ENCODE measurements at regions of chr1 and their contacts with region 1.

Region 1: DNA sequence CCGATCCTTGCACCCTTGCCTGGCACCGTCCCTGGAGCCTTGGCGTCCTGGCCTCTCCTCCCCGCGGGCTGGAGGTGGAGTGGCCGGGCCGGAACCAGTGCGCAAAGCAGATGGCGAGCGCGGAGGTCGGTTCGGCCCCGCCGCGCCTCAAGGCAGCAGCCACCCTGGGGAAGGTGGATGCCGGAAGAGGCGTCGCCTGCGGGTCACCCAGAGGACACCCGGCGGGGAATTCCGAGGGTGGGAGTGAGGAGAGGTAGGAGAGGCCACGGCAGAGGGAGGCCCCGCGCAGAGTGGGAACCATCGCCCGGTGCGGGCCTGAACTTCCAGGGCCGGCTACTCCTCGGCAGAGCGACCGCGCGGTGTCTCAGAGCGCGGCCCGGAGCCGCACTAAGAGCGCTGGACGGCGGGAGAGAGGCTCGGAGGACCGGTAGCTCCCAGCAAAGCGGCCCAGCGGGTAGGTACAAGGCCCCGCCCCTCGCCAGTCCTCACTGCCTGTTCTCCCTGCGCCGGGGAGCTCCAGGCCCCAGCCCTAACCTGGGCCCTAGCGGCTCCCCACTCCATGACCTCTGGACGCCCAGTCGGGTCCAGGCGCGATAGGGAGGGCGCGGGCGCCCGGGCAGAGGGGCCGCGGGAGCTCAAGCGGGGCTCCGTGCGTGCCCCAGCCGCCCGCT is at the start of gene RNF207:
- DNase-seq: peak; percentile 94
- H3K4me3 Mint-ChIP-seq: peak within 1 kb of the TSS; percentile 85
- H3K27ac Mint-ChIP-seq: peak within 1 kb of the TSS; percentile 82
- H3K4me1 Mint-ChIP-seq: peaks cover 17% of the 10 kb centered on the region
- H3K27me3 Mint-ChIP-seq: no peaks in the 10 kb centered on the region
- total RNA-seq, gene RNF207: 53.2 and 54.7 TPM in 2 replicates

Region 2: GRCh38 chr1:5938101-5938646 is 267.8 kb before region 1 on chr1:
- intact Hi-C with region 1: no loop called
- DNase-seq: no peak
- H3K4me3 Mint-ChIP-seq: no peak overlapping the region
- H3K27ac Mint-ChIP-seq: no peak overlapping the region
- H3K4me1 Mint-ChIP-seq: no peaks in the 10 kb centered on the region
- H3K27me3 Mint-ChIP-seq: no peaks in the 10 kb centered on the region

Region 3: GRCh38 chr1:6026095-6026809 is 179.7 kb before region 1 on chr1:
- intact Hi-C with region 1: loop called (anchors 5 kb)
- DNase-seq: peak; percentile 98
- H3K4me3 Mint-ChIP-seq: peak overlapping the region; percentile 94
- H3K27ac Mint-ChIP-seq: peak overlapping the region; percentile 95
- H3K4me1 Mint-ChIP-seq: peaks cover 43% of the 10 kb centered on the region
- H3K27me3 Mint-ChIP-seq: no peaks in the 10 kb centered on the region

Measured in activated CD4-positive, alpha-beta T cell treated with anti-CD3 and anti-CD28 coated beads, Interleukin-2, amount 10 ng/mL, durations not matched to agents 24 days and 14 days (primary cell).